Activated T-helper 1 cell treated with anti-CD3 and anti-CD28 coated beads, Interleukin-12 subunit alpha, Interleukin-12 subunit beta, Interleukin-2, Interleukin-4 antibody, amounts not matched to agents 30 ng/mL and 10 ng/mL and 1 ng/mL, durations not matched to agents 14 hours and 24 hours and 36 hours (primary cell): ENCODE measurements at regions of chr11 and their contacts with region 1.

Region 1: DNA sequence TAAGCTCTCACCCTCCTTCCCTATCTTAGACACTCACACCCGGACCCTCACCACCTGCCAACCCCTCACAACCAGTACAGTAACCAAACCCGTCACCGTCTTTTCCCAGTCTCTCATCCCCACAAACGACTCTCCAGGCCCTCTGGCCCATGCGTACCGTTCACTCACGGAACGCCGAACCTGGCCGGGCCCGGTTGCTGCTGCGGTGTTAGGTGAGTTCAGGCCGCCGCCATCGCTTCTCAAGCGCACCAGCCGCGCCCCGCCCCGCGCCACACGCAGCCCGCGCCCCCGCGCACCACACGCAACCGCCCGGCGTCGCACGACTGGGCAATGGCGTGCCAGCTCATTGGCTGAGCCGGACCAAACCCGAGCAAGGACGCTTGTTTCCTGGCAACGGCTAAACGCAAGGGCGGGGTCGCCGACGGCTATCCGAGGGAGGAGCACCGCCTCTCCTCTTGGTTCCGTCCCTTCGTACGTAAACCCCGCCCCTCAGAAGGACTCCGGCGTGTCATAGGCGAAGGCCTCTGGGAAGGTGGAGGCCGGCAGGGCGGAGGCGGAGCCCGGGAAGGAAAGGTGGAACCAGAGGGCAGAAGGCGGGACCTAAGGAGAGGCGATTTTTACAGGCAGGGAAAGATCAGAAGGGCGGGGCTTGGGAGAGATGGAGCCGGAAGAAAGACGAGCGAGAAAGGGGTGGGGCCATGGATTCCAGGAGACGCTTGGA is at the start of gene FHIP1B:
- DNase-seq: peak; percentile 100
- H3K4me3 Mint-ChIP-seq: peak within 1 kb of the TSS; percentile 99
- H3K27ac Mint-ChIP-seq: peak within 1 kb of the TSS; percentile 96
- H3K4me1 Mint-ChIP-seq: peaks cover 38% of the 10 kb centered on the region
- H3K27me3 Mint-ChIP-seq: peaks cover 3% of the 10 kb centered on the region
- total RNA-seq, gene FHIP1B: 19.3 TPM in 2 replicates

Region 2: GRCh38 chr11:4393209-4393857 is 1841.2 kb before region 1 on chr11 and contains the start of gene TRIM21:
- intact Hi-C with region 1: loop called (anchors 10 kb)
- DNase-seq: peak; percentile 88
- H3K4me3 Mint-ChIP-seq: peak within 1 kb of the TSS; percentile 89
- H3K27ac Mint-ChIP-seq: peak within 1 kb of the TSS; percentile 87
- H3K4me1 Mint-ChIP-seq: peaks cover 43% of the 10 kb centered on the region
- H3K27me3 Mint-ChIP-seq: no peaks in the 10 kb centered on the region
- total RNA-seq, gene TRIM21: 28.8 and 31.6 TPM in 2 replicates

Region 3: GRCh38 chr11:4459500-4459899 is 1775.0 kb before region 1 on chr11:
- intact Hi-C with region 1: no loop called
- DNase-seq: no peak
- H3K4me3 Mint-ChIP-seq: no peak overlapping the region
- H3K27ac Mint-ChIP-seq: no peak overlapping the region
- H3K4me1 Mint-ChIP-seq: peaks cover 7% of the 10 kb centered on the region
- H3K27me3 Mint-ChIP-seq: peaks cover 3% of the 10 kb centered on the region

Region 4: DNA sequence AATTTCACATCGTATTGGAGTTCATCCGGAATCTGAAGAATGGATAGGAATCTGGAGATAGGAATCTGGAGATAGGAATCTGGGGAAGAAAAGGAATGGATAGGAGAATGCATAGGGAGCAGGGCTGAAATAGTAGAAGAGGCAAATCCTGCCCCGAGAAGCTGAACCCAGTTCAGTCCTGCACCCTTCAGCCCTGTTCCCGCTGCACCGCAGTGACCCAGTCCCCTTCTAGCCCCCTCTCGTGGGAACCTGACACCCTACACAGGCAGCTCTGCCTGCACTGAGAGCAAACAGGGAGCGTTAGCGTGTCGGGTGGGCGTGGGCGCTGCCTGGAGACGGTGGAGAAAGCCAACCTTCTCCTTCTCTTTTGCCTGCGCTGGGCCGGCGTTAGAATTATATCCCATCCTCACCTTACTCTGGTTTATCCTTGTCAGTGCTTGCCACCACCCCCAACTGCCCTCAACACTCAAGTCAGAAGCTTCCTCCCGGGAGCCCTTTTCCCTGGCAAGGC is 24.1 kb after region 1 on chr11:
- intact Hi-C with region 1: loop called (anchors 2 kb)
- DNase-seq: no peak
- H3K4me3 Mint-ChIP-seq: no peak overlapping the region
- H3K27ac Mint-ChIP-seq: no peak overlapping the region
- H3K4me1 Mint-ChIP-seq: no peaks in the 10 kb centered on the region
- H3K27me3 Mint-ChIP-seq: peaks cover 12% of the 10 kb centered on the region

Region 5: GRCh38 chr11:6353367-6353987 is 118.9 kb after region 1 on chr11:
- intact Hi-C with region 1: loop called (anchors 5 kb)
- DNase-seq: peak; percentile 47
- H3K4me3 Mint-ChIP-seq: no peak overlapping the region
- H3K27ac Mint-ChIP-seq: no peak overlapping the region
- H3K4me1 Mint-ChIP-seq: peaks cover 12% of the 10 kb centered on the region
- H3K27me3 Mint-ChIP-seq: no peaks in the 10 kb centered on the region

Region 6: GRCh38 chr11:6481012-6481923 is 246.7 kb after region 1 on chr11 and contains the starts of genes ARFIP2 and TIMM10B:
- intact Hi-C with region 1: loop called (anchors 1 kb)
- DNase-seq: peak; percentile 97
- H3K4me3 Mint-ChIP-seq: peak within 1 kb of the TSS; percentile 94
- H3K27ac Mint-ChIP-seq: peak within 1 kb of the TSS; percentile 94
- H3K4me1 Mint-ChIP-seq: peaks cover 40% of the 10 kb centered on the region
- H3K27me3 Mint-ChIP-seq: no peaks in the 10 kb centered on the region
- total RNA-seq, gene ARFIP2: 51.5 and 53.8 TPM in 2 replicates
- total RNA-seq, gene TIMM10B: 38.8 and 42.7 TPM in 2 replicates

Region 7: DNA sequence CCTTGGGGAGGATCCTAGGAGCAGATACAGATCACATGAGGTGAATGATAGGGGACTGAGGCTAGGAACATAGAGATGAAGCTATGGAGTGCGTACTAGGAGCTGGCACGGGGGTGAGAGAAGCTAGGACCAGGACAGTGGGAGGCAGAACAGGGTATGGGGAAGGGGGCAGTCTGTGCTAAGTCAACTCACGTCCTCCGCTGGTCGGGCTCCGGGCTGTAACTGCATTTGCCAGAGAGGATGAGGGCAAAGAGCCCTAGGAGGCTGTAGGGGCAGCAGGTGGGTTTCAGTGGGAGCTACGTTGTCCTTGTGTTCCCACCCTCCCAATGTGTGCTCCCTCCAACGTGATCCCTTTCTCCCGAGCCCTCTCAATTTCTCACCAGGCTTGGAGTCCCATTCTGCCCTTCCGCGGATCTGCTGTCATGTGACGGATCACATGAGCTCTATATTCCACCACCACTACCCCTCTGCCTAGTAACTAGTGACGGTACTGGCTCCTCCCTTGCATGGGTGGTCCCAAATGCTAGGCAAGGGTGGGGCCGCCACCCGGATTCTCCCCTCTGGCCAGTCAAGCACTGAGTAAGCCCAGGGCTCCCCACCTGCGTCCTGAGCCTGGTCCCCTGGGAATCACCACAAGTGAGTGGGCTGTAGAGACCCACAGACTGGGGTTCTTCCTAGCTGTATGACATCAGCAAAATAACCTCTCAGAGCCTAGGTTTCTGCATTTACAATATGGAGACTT is 384.6 kb after region 1 on chr11 and contains the start of gene TPP1:
- intact Hi-C with region 1: loop called (anchors 1 kb)
- DNase-seq: peak; percentile 89
- H3K4me3 Mint-ChIP-seq: no peak within 1 kb of the TSS
- H3K27ac Mint-ChIP-seq: no peak within 1 kb of the TSS
- H3K4me1 Mint-ChIP-seq: no peaks in the 10 kb centered on the region
- H3K27me3 Mint-ChIP-seq: no peaks in the 10 kb centered on the region
- total RNA-seq, gene TPP1: 38.4 and 40.3 TPM in 2 replicates

Region 8: GRCh38 chr11:7513234-7514098 is 1278.9 kb after region 1 on chr11 and contains the start of gene PPFIBP2:
- intact Hi-C with region 1: loop called (anchors 5 kb)
- DNase-seq: peak; percentile 80
- H3K4me3 Mint-ChIP-seq: peak within 1 kb of the TSS; percentile 91
- H3K27ac Mint-ChIP-seq: peak within 1 kb of the TSS; percentile 84
- H3K4me1 Mint-ChIP-seq: peaks cover 10% of the 10 kb centered on the region
- H3K27me3 Mint-ChIP-seq: peaks cover 33% of the 10 kb centered on the region
- total RNA-seq, gene PPFIBP2: 0.62 and 2.9 TPM in 2 replicates